Right ventricle myocardium superior (tissue), 1 donor: ENCODE measurements at regions of chr6 and their contacts with region 1.

Region 1: GRCh38 chr6:17971128-17972073 is 16.0 kb downstream of the KIF13A start:
- DNase-seq: no peak
- ATAC-seq: no peak

Region 2: GRCh38 chr6:17917837-17918763 is 53.3 kb before region 1 on chr6:
- intact Hi-C with region 1: no loop called
- DNase-seq: no peak
- ATAC-seq: no peak

Region 3: DNA sequence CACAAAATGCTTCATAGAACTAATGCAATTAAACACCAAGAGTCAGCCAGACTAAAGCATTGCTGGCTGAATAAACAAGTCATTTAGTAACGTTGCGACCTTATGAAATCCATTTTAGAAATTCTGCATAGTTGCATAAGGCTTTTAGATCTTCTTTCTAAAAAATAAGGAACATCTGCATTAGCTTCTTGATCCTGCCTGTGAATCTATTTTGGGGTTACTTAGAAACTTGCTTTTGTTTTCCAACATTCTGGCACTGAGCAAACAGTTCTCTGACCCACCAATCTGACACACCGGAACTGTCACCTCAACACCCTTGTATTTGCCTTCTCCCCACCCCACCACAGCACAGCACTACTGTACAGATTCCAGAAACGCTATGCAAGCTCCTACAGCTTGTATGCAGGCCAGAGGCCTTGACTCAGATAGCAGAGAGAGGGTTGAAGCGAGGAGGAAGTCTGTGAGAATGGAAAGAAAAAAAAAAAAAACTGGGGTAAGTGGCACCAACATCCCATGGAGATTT is 39.0 kb before region 1 on chr6:
- intact Hi-C with region 1: loop called (anchors 5 kb)
- DNase-seq: peak; percentile 56
- ATAC-seq: peak; percentile 89